ENCODE measurements at regions of chr15 and their contacts with region 1.

Region 1: GRCh38 chr15:49169880-49170597 is at the start of gene GALK2:
- DNase-seq: peak; percentile 91
- ATAC-seq: peak; percentile 100
- H3K4me3 Mint-ChIP-seq: peak within 1 kb of the TSS; percentile 91
- H3K27ac Mint-ChIP-seq: peak within 1 kb of the TSS; percentile 96
- H3K4me1 Mint-ChIP-seq: peaks cover 7% of the 10 kb centered on the region
- H3K27me3 Mint-ChIP-seq: peaks cover 7% of the 10 kb centered on the region
- CTCF ChIP-seq: no peak
- total RNA-seq, gene GALK2: 15.6 to 16.9 TPM (median 16.6 TPM) in 3 replicates

Region 2: GRCh38 chr15:48939686-48940085 is 230.4 kb before region 1 on chr15:
- CTCF ChIA-PET with region 1: no interaction called
- POLR2A ChIA-PET with region 1: no interaction called
- DNase-seq: no peak
- ATAC-seq: no peak
- H3K4me3 Mint-ChIP-seq: no peak overlapping the region
- H3K27ac Mint-ChIP-seq: no peak overlapping the region
- H3K4me1 Mint-ChIP-seq: no peaks in the 10 kb centered on the region
- H3K27me3 Mint-ChIP-seq: no peaks in the 10 kb centered on the region; the same call in 1 of the 2 replicates
- CTCF ChIP-seq: no peak

Region 3: GRCh38 chr15:49155110-49155833 is 14.8 kb before region 1 on chr15 and contains the start of gene COPS2:
- CTCF ChIA-PET with region 1: interaction called, 6 read pairs
- POLR2A ChIA-PET with region 1: interaction called, 17 read pairs
- DNase-seq: peak; percentile 91
- ATAC-seq: peak; percentile 98
- H3K4me3 Mint-ChIP-seq: peak within 1 kb of the TSS; percentile 99
- H3K27ac Mint-ChIP-seq: peak within 1 kb of the TSS; percentile 97
- H3K4me1 Mint-ChIP-seq: peaks cover 31% of the 10 kb centered on the region
- H3K27me3 Mint-ChIP-seq: no peaks in the 10 kb centered on the region
- CTCF ChIP-seq: no peak
- total RNA-seq, gene COPS2: 61.4 to 68.6 TPM (median 64.6 TPM) in 3 replicates

Region 4: DNA sequence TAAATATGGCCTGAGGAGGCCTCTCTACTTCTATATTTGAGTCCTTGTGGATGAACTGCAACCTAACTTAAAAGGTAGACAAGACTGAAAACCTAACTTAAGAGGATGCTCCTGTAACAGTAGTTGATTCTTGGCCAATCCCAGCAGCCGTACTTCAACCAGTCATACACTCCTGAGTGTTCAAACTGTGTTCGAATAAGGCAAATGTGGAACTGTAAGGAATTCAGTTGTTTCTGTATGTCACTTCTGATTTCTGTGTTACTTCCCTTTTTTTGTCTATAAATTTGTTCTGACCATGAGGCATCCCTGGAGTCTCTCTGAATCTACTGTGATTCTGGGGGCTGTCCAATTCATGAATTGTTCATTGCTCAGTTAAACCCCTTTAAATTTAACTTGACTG is 20.5 kb after region 1 on chr15:
- CTCF ChIA-PET with region 1: no interaction called
- POLR2A ChIA-PET with region 1: no interaction called
- DNase-seq: no peak
- ATAC-seq: no peak
- H3K4me3 Mint-ChIP-seq: no peak overlapping the region
- H3K27ac Mint-ChIP-seq: no peak overlapping the region
- H3K4me1 Mint-ChIP-seq: peaks cover 37% of the 10 kb centered on the region
- H3K27me3 Mint-ChIP-seq: no peaks in the 10 kb centered on the region
- CTCF ChIP-seq: no peak

Region 5: GRCh38 chr15:49430046-49430445 is 260.0 kb after region 1 on chr15:
- CTCF ChIA-PET with region 1: no interaction called
- POLR2A ChIA-PET with region 1: no interaction called
- DNase-seq: no peak
- ATAC-seq: no peak
- H3K4me3 Mint-ChIP-seq: no peak overlapping the region
- H3K27ac Mint-ChIP-seq: no peak overlapping the region
- H3K4me1 Mint-ChIP-seq: no peaks in the 10 kb centered on the region
- H3K27me3 Mint-ChIP-seq: no peaks in the 10 kb centered on the region; the same call in 1 of the 2 replicates
- CTCF ChIP-seq: no peak

Measured in WTC11 (cell line).